H1 (cell line): ENCODE measurements at regions of chr17 and their contacts with region 1.

Region 1: GRCh38 chr17:48505787-48506645 is 24.8 kb downstream of the HOXB1 start:
- DNase-seq: no peak
- H3K4me3 ChIP-seq: no peak overlapping the region
- H3K27ac ChIP-seq: no peak overlapping the region
- H3K4me1 ChIP-seq: peaks cover 0 to 4% (median 0%) of the 10 kb centered on the region in 4 experiments; a peak in 1 of 7 replicates
- H3K27me3 ChIP-seq: peaks cover 0 to 13% (median 7%) of the 10 kb centered on the region in 4 experiments; a peak in 4 of 7 replicates
- CTCF ChIP-seq: no peak
- EP300 ChIP-seq: no peak
- POLR2A ChIP-seq: no peak
- RAD21 ChIP-seq: no peak

Region 2: DNA sequence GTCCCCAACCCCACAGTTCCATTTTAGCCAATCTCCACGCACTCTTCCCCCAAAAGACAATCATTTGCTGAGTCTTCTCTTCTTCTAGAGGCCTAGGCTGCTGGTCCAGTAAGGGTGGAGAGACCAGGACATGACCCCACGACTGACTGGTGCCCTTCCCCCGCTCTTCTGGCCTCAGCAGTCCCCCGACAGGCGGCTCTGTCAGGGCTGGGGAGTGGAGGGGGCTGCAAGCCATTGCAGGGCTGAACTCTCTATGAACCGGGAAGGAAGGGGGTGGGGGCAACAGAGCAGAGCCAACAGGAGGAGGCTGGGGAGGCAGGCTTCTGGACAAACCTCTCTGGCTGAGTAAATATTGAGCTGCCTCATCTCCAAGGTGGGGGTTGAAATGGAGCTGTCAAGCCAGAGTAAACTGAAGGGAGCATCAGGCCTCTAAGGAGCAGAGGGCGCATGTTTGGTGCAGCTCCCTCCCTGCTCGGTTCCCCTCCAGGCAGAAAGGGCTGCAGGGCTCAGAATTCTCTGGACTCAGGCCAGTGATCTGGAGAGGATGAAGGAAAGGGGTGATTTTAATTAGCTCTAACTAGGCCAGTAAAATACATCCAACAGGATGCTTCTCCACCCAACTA is 16.1 kb after region 1 on chr17:
- CTCF ChIA-PET with region 1: interaction called, 21 read pairs
- POLR2A ChIA-PET with region 1: interaction called, 3 read pairs
- DNase-seq: no peak
- H3K4me3 ChIP-seq: no peak overlapping the region
- H3K27ac ChIP-seq: no peak overlapping the region
- H3K4me1 ChIP-seq: peaks cover 5 to 14% (median 7%) of the 10 kb centered on the region in 4 experiments
- H3K27me3 ChIP-seq: peaks cover 35 to 78% (median 73%) of the 10 kb centered on the region in 4 experiments
- CTCF ChIP-seq: no peak
- EP300 ChIP-seq: no peak
- POLR2A ChIP-seq: no peak
- RAD21 ChIP-seq: no peak